ENCODE measurements at regions of chr6 and their contacts with region 1.

Region 1: GRCh38 chr6:99802396-99803031 is 191.5 kb downstream of the MCHR2 start:
- DNase-seq: peak; percentile 3
- H3K4me3 ChIP-seq: no peak overlapping the region
- H3K27ac ChIP-seq: no peak overlapping the region
- H3K4me1 ChIP-seq: no peaks in the 10 kb centered on the region
- H3K27me3 ChIP-seq: no peaks in the 10 kb centered on the region
- CTCF ChIP-seq: peak; percentile 42

Region 2: GRCh38 chr6:99588618-99589289 is 213.8 kb before region 1 on chr6:
- CTCF ChIA-PET with region 1: no interaction called
- POLR2A ChIA-PET with region 1: no interaction called
- intact Hi-C with region 1: loop called (anchors 10 kb)
- DNase-seq: peak; percentile 92
- H3K4me3 ChIP-seq: peak overlapping the region; percentile 52
- H3K27ac ChIP-seq: no peak overlapping the region
- H3K4me1 ChIP-seq: peaks cover 15% of the 10 kb centered on the region
- H3K27me3 ChIP-seq: no peaks in the 10 kb centered on the region
- CTCF ChIP-seq: peak; percentile 89

Measured in A673 (cell line).